ENCODE measurements at regions of chr6 and their contacts with region 1.

Region 1: GRCh38 chr6:6547110-6547879 is 41.2 kb upstream of the LY86 start:
- DNase-seq: peak; percentile 86 to 87 (median 86)
- ATAC-seq: peak; percentile 100
- H3K4me3 ChIP-seq: no peak overlapping the region
- H3K27ac ChIP-seq: no peak overlapping the region
- H3K4me1 ChIP-seq: peaks cover 0 to 10% of the 10 kb centered on the region in 2 experiments; a peak in 2 of 5 replicates
- H3K27me3 ChIP-seq: peaks cover 17 to 47% of the 10 kb centered on the region in 2 experiments
- CTCF ChIP-seq: peak; percentile 89 to 96 (median 94)
- EP300 ChIP-seq: no peak
- POLR2A ChIP-seq: no peak
- RAD21 ChIP-seq: peak; percentile 96

Region 2: DNA sequence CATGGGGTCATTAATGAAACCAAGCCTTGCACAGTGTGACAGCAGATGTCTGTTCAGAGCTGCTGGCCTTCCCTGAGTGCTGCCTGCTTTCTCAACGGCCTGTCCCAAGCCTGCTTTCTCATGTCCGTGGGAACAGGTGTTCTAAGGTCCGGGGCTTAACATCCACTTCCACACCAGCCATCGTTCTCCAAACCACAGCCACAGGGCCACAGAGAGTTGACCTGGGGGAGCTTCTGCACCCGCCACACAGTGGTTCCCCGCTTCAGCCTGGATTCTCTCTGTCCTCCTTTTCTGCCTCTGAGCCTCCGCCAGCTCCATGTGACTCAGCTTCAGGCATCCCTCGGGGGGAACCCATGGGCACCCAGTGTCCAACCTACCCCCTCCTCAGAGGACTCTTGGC is 1489.0 kb before region 1 on chr6:
- CTCF ChIA-PET with region 1: no interaction called
- POLR2A ChIA-PET with region 1: no interaction called
- in situ Hi-C with region 1: no loop called
- intact Hi-C with region 1: loop called (anchors 5 kb)
- DNase-seq: no peak
- ATAC-seq: peak; percentile 51
- H3K4me3 ChIP-seq: no peak overlapping the region
- H3K27ac ChIP-seq: no peak overlapping the region
- H3K4me1 ChIP-seq: no peaks in the 10 kb centered on the region
- H3K27me3 ChIP-seq: peaks cover 11 to 23% of the 10 kb centered on the region in 2 experiments; a peak in 4 of 5 replicates
- CTCF ChIP-seq: no peak
- EP300 ChIP-seq: no peak
- POLR2A ChIP-seq: no peak
- RAD21 ChIP-seq: no peak

Region 3: DNA sequence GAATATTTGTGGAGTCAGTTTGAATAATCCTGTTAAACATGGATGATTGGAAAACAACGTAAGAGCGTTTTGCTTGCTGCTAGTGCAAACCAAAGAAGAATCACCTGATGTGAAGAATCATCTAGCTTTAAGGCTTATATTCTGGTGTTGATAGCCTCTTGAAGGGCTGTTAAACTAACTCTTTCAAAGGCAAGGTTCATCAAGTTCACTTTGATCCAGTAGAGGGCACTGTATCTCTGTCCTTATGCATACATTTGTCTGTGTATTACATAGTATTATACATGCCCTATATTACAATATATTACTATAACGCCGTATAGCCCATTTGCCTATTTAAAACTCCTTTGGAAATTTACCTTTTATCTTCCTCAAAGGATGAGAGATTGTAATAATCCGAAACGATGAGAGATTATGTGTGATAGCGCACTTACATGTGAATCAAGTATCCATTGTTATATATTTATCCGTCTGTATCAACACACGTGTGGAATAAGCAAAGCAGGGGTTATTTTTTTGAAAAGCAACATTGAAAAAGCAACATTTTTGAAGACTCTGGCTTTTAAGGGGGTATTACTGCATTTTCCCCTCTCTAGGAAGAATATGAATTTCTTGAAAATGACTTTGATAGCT is 489.8 kb before region 1 on chr6:
- CTCF ChIA-PET with region 1: interaction called, 6 read pairs
- POLR2A ChIA-PET with region 1: no interaction called
- in situ Hi-C with region 1: loop called (anchors 25 kb)
- intact Hi-C with region 1: loop called (anchors 1 kb)
- DNase-seq: peak; percentile 31 to 64 (median 44)
- ATAC-seq: peak; percentile 93
- H3K4me3 ChIP-seq: no peak overlapping the region
- H3K27ac ChIP-seq: no peak overlapping the region
- H3K4me1 ChIP-seq: no peaks in the 10 kb centered on the region
- H3K27me3 ChIP-seq: peaks cover 0 to 5% of the 10 kb centered on the region in 2 experiments; a peak in 2 of 5 replicates
- CTCF ChIP-seq: peak; percentile 38 to 76 (median 66); a peak in 5 of 6 replicates
- EP300 ChIP-seq: no peak
- POLR2A ChIP-seq: no peak
- RAD21 ChIP-seq: peak; percentile 62 to 81

Region 4: GRCh38 chr6:6131492-6132109 is 415.7 kb before region 1 on chr6:
- CTCF ChIA-PET with region 1: no interaction called
- POLR2A ChIA-PET with region 1: no interaction called
- in situ Hi-C with region 1: no loop called
- intact Hi-C with region 1: loop called (anchors 5 kb)
- DNase-seq: peak; percentile 59 to 67 (median 66)
- ATAC-seq: peak; percentile 91
- H3K4me3 ChIP-seq: no peak overlapping the region
- H3K27ac ChIP-seq: no peak overlapping the region
- H3K4me1 ChIP-seq: no peaks in the 10 kb centered on the region
- H3K27me3 ChIP-seq: no peaks in the 10 kb centered on the region
- CTCF ChIP-seq: peak; percentile 64 to 72 (median 68)
- EP300 ChIP-seq: no peak
- POLR2A ChIP-seq: no peak
- RAD21 ChIP-seq: peak; percentile 24 to 60; a peak in 2 of 4 replicates

Region 5: GRCh38 chr6:6534399-6534798 is 12.9 kb before region 1 on chr6:
- CTCF ChIA-PET with region 1: no interaction called
- POLR2A ChIA-PET with region 1: interaction called, 10 read pairs
- in situ Hi-C with region 1: no loop called
- intact Hi-C with region 1: no loop called
- DNase-seq: no peak
- ATAC-seq: no peak
- H3K4me3 ChIP-seq: no peak overlapping the region
- H3K27ac ChIP-seq: no peak overlapping the region
- H3K4me1 ChIP-seq: no peaks in the 10 kb centered on the region
- H3K27me3 ChIP-seq: peaks cover 16 to 17% of the 10 kb centered on the region in 2 experiments
- CTCF ChIP-seq: no peak
- EP300 ChIP-seq: no peak
- POLR2A ChIP-seq: no peak
- RAD21 ChIP-seq: no peak

Region 6: GRCh38 chr6:7292596-7293255 is 745.4 kb after region 1 on chr6:
- CTCF ChIA-PET with region 1: no interaction called
- POLR2A ChIA-PET with region 1: no interaction called
- in situ Hi-C with region 1: no loop called
- intact Hi-C with region 1: no loop called
- DNase-seq: no peak
- ATAC-seq: no peak
- H3K4me3 ChIP-seq: no peak overlapping the region
- H3K27ac ChIP-seq: no peak overlapping the region
- H3K4me1 ChIP-seq: no peaks in the 10 kb centered on the region
- H3K27me3 ChIP-seq: no peaks in the 10 kb centered on the region
- CTCF ChIP-seq: no peak
- EP300 ChIP-seq: no peak
- POLR2A ChIP-seq: no peak
- RAD21 ChIP-seq: no peak